HepG2 (cell line): ENCODE measurements at regions of chr11 and their contacts with region 1.

Region 1: GRCh38 chr11:121091492-121092152 is 9.4 kb upstream of the TECTA start:
- DNase-seq: peak; percentile 25
- ATAC-seq: peak; percentile 47; the same call in 1 of the 3 replicates
- H3K4me3 ChIP-seq: no peak overlapping the region
- H3K27ac ChIP-seq: no peak overlapping the region
- H3K4me1 ChIP-seq: peaks cover 7% of the 10 kb centered on the region
- H3K27me3 ChIP-seq: no peaks in the 10 kb centered on the region
- CTCF ChIP-seq: no peak
- EP300 ChIP-seq: no peak
- POLR2A ChIP-seq: no peak
- RAD21 ChIP-seq: no peak

Region 2: GRCh38 chr11:120400564-120401364 is 690.9 kb before region 1 on chr11:
- CTCF ChIA-PET with region 1: no interaction called
- POLR2A ChIA-PET with region 1: no interaction called
- in situ Hi-C with region 1: no loop called
- intact Hi-C with region 1: loop called (anchors 5 kb)
- DNase-seq: peak; percentile 93
- ATAC-seq: peak; percentile 98
- H3K4me3 ChIP-seq: peak overlapping the region; percentile 37 to 57 (median 51); a peak in 5 of 6 replicates
- H3K27ac ChIP-seq: peak overlapping the region; percentile 78
- H3K4me1 ChIP-seq: peaks cover 68% of the 10 kb centered on the region
- H3K27me3 ChIP-seq: no peaks in the 10 kb centered on the region
- CTCF ChIP-seq: no peak
- EP300 ChIP-seq: peak in 1 of 2 experiments; percentile 70; a peak in 2 of 4 replicates
- POLR2A ChIP-seq: no peak
- RAD21 ChIP-seq: no peak